PC-9 (cell line): ENCODE measurements at regions of chr19 and their contacts with region 1.

Region 1: DNA sequence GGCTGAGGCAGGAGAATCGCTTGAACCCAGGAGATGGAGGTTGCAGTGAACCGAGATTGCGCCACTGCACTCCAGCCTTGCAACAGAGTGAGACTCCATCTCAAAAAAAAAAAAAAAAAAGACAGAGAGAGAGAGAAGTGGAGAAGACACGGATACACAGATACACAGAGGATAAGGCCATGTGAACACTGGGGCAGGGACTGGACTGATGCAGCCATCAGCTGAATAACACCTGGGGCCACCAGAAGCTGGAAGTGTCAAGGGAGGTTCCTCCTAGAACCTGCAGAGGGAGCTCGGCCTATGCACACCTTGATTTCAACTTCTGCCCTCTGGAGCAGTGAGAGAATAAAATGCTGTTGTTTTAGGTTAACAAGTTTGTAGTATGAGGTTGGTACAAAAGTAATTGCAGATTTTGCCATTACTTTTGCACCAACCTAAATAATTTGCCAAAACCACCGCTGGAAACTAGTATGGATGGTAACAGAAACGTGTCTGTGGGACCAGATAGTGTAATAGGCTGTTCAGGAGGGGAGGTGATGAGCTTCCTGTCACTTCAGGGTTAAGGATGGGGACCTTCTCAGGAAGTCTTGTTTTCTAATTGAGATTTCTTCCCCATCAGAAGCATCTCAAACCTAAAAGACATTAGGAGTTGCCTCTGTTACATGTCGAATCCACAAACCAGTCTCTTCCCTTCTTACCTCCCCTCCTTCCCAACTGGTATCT is 36.4 kb upstream of the IGSF23 start:
- DNase-seq: peak; percentile 58 to 69
- H3K4me3 ChIP-seq: no peak overlapping the region
- H3K27ac ChIP-seq: peak overlapping the region; percentile 97
- H3K4me1 ChIP-seq: peaks cover 56% of the 10 kb centered on the region
- H3K27me3 ChIP-seq: no peaks in the 10 kb centered on the region
- CTCF ChIP-seq: peak; percentile 80

Region 2: DNA sequence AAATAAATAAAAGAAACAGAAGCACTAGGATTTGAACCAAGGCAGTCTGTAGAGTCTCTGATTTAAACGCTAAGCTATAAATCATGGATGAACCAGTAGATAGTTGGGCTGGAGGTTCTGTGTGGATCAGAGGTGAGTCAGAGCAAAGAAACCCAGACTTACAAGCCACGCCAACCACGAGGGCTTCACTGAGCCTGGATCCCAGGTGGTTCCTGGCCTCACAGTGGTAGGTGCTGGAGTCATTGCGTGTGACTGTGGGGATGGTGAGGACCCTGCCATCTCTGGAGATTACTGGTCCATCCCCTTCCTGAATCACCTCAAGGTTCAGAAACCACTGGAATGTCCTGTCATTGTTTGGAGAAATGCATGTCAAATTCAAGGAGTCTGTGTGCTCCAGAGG is 28.3 kb before region 1 on chr19:
- CTCF ChIA-PET with region 1: no interaction called
- POLR2A ChIA-PET with region 1: no interaction called
- intact Hi-C with region 1: no loop called
- DNase-seq: no peak
- H3K4me3 ChIP-seq: no peak overlapping the region
- H3K27ac ChIP-seq: no peak overlapping the region
- H3K4me1 ChIP-seq: peaks cover 7% of the 10 kb centered on the region
- H3K27me3 ChIP-seq: peaks cover 8% of the 10 kb centered on the region; the same call in 1 of the 2 replicates
- CTCF ChIP-seq: no peak

Region 3: GRCh38 chr19:44643605-44644401 is 66.8 kb after region 1 on chr19 and contains the start of gene PVR:
- CTCF ChIA-PET with region 1: interaction called, 13 read pairs
- POLR2A ChIA-PET with region 1: no interaction called
- intact Hi-C with region 1: no loop called
- DNase-seq: peak; percentile 70 to 78
- H3K4me3 ChIP-seq: peak within 1 kb of the TSS; percentile 88
- H3K27ac ChIP-seq: peak within 1 kb of the TSS; percentile 92
- H3K4me1 ChIP-seq: peaks cover 49% of the 10 kb centered on the region
- H3K27me3 ChIP-seq: no peaks in the 10 kb centered on the region
- CTCF ChIP-seq: no peak
- total RNA-seq, gene PVR: 50.8 and 52.1 TPM in 2 replicates

Region 4: GRCh38 chr19:44653977-44654774 is 77.2 kb after region 1 on chr19:
- CTCF ChIA-PET with region 1: interaction called, 3 read pairs
- POLR2A ChIA-PET with region 1: no interaction called
- intact Hi-C with region 1: loop called (anchors 1 kb)
- DNase-seq: peak; percentile 76 to 84
- H3K4me3 ChIP-seq: no peak overlapping the region
- H3K27ac ChIP-seq: peak overlapping the region; percentile 33
- H3K4me1 ChIP-seq: peaks cover 8% of the 10 kb centered on the region; the same call in 1 of the 2 replicates
- H3K27me3 ChIP-seq: no peaks in the 10 kb centered on the region
- CTCF ChIP-seq: peak; percentile 77

Region 5: DNA sequence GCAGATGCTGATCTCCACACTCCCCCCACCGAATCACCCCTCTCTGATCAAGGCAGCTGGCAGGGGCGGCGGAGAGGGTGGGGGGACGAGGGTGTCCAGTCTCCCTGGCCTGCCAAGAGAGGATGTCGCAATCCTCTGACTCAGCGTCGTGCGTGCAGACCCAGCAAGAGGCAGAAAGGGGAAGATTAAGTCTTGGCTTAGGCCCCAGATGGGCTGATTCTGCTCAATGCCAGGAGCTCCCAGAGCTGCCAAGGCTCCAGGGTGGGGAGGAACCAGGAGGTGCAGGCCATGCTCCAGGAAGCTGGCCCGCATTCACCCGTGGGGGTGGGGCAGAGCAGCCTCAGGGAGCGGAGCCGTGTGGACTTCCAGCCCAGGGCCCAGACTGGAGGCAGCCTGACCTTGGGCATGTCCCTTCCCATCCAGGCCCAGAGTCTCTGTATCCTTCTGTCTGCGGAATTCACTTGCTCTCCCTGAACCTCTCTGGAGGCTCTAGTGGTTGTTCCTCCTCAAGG is 164.9 kb after region 1 on chr19:
- CTCF ChIA-PET with region 1: interaction called, 16 read pairs
- POLR2A ChIA-PET with region 1: no interaction called
- intact Hi-C with region 1: no loop called
- DNase-seq: peak; percentile 97 to 99
- H3K4me3 ChIP-seq: peak overlapping the region; percentile 44; the same call in 1 of the 2 replicates
- H3K27ac ChIP-seq: peak overlapping the region; percentile 99
- H3K4me1 ChIP-seq: peaks cover 80% of the 10 kb centered on the region
- H3K27me3 ChIP-seq: no peaks in the 10 kb centered on the region
- CTCF ChIP-seq: no peak